Pancreas (tissue), 10 donors: ENCODE measurements at regions of chr20 and their contacts with region 1.

Region 1: DNA sequence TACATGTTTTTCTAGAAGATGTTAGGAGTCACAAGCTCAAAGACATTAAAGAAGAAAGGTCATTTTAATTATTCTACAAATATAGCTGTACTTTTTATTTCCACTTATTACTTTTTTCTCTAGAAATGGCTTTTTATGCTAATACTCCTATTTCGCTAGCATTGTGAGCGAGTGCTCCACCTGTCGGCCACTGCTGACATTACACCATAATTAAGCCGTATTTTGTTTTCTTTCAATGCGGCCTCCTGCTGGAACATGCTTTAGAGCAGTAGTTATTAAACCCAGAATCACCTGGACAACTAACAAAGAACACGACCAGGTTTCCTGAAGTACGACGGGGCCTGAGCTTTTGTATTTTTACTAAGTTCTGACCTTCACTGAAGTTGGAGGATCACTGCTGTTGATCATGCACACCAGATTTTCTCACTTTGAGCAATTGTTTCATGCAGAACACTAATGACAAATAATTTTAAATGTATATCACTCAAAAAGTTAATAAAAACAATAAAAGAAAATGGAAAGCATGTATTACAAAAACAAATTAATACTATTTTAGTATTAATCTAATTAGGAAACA is 74.1 kb upstream of the PAK5 start:
- DNase-seq: peak in 4 of 6 donors; percentile 3 to 67 (median 46)
- ATAC-seq: peak; percentile 46 to 87 (median 77)
- H3K4me3 ChIP-seq: no peak overlapping the region
- H3K27ac ChIP-seq: no peak overlapping the region
- H3K4me1 ChIP-seq: no peaks in the 10 kb centered on the region
- H3K27me3 ChIP-seq: no peaks in the 10 kb centered on the region
- CTCF ChIP-seq: peak; percentile 39 to 74 (median 60)

Region 2: DNA sequence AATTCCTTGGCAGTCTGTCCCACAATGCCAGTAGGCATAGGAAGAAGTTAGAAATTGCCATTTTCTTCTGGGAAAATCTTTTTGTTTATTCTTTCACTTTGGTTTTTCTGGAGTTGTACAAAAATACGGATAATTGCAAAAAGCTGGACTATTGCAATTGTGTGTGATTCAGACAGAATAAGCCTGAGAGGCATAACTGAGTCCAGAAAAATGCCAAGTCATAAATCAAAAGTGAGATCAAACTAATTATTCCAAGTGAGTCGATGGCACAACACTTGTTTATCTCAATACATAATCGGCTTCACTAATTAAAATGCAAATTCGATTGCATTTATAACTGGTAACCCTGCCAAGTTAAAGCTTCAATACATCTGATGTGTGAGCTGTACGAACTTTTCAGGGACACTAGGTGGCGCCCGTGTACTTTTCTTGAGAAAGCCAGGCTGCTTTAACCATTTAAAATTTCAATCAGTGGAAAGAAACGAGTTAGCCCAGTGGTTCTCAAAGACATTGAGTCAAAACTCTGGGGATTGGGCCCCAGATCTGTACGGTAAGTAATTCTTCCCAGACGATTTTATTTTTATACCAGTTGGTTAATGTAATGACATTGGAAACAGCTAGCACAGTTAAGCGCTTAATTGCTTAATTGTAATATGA is 296.0 kb before region 1 on chr20:
- intact Hi-C with region 1: loop called in 2 of 3 experiments (anchors 5 to 10 kb)
- DNase-seq: peak in 5 of 6 donors; percentile 43 to 70 (median 58)
- ATAC-seq: peak; percentile 82 to 95 (median 88)
- H3K4me3 ChIP-seq: no peak overlapping the region
- H3K27ac ChIP-seq: no peak overlapping the region
- H3K4me1 ChIP-seq: no peaks in the 10 kb centered on the region
- H3K27me3 ChIP-seq: no peaks in the 10 kb centered on the region
- CTCF ChIP-seq: peak; percentile 60 to 84 (median 74)